AG04450 (cell line): ENCODE measurements at regions of chr2 and their contacts with region 1.

Region 1: DNA sequence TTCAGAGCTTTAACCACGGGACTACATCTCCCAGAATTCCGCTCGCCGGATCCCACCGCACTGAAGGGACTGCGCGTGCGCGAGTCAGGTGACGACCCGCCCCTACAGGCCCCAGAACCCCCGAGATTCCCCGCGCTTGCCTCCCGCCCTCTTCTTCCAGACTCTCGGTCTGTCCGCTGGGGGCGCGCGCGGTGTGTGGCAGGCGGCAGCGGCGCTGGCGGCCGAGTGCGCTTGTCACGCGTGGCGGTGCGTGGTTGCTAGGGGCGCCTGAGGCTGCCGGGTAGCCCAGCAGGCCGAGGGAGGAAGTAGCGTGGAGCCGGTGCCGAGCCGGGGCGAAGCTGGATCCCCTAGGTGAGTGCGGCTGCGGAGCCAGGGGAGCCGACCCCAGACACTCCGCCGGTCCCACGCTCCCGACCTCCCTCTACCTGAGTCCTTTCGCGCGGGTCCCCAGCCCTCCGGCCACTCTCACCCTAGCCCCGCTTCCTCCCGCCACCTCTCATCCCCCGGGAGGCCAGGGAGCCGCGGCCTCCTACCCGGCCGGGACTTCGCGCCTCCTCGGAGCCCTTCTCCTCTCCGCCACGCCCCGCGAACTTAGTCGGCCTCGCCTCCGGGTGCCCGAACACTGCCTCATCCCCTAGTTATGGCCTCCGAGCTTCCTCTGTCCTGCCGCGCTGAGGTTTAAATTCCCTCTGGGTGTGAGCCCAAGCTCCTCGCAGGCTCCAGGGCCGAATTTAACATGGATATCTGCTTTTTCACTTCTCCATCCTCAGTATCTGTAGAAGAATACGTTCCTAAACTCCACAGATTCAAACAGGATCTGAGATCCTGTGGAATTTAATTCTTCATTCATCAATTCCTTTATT is at the start of gene TTLL4:
- DNase-seq: peak; percentile 88
- H3K4me3 ChIP-seq: peak within 1 kb of the TSS; percentile 91
- H3K27ac ChIP-seq: peak within 1 kb of the TSS; percentile 87
- H3K27me3 ChIP-seq: no peaks in the 10 kb centered on the region
- CTCF ChIP-seq: peak; percentile 74
- polyA plus RNA-seq, gene TTLL4: 16.3 and 18.0 TPM in 2 replicates

Region 2: DNA sequence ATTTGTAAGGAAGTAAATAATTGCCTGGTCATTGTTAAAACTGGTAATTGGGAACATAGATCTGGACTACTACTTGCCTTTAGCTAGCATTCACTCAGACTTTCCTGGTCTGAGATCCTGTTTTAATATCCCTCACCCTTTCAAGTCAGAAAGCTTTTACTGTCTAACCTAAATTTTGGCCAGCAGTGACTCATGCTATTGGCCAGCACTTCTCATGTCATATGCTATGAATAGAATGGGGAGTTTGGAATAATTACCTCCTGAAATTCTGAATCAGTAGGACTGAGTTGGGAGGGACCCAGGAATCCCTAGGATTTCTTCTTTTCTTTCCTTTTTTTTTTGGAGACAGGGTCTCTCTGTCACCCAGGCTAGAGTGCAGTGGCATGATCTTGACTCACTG is 19.7 kb before region 1 on chr2:
- CTCF ChIA-PET with region 1: interaction called, 24 read pairs
- POLR2A ChIA-PET with region 1: interaction called, 3 read pairs
- DNase-seq: peak; percentile 10
- H3K4me3 ChIP-seq: no peak overlapping the region
- H3K27ac ChIP-seq: no peak overlapping the region
- H3K27me3 ChIP-seq: no peaks in the 10 kb centered on the region
- CTCF ChIP-seq: no peak

Region 3: DNA sequence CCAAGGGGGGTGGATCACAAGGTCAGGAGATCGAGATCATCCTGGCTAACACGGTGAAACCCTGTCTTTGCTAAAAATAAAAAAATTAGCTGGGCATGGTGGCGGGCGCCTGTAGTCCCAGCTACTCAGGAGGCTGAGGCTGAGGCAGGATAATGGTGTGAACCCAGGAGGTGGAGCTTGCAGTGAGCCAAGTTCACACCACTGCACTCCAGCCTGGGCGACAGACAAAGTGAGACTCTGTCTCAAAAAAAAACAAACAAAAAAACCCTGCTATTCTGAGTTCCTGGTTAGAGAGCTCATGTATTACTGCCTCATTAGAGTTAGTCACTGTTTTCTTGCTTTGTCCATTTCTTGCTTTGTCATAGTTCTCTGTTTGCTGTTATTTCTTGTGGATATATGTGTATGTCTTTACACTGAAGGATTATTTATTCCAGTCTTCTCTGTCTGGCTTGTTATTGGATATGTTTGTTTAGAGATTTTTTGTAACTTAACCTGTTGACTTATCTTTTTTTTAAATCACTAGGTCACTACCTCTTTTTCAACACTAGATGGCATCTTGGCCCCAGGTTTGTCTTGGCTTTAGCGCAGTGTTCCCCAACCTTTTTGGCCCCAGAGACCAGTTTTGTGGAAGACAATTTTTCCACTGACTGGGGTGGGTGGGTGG is 16.7 kb after region 1 on chr2:
- CTCF ChIA-PET with region 1: interaction called, 22 read pairs
- POLR2A ChIA-PET with region 1: interaction called, 7 read pairs
- DNase-seq: no peak
- H3K4me3 ChIP-seq: no peak overlapping the region
- H3K27ac ChIP-seq: no peak overlapping the region
- H3K27me3 ChIP-seq: no peaks in the 10 kb centered on the region
- CTCF ChIP-seq: peak; percentile 42

Region 4: GRCh38 chr2:218733171-218734021 is 22.5 kb after region 1 on chr2:
- CTCF ChIA-PET with region 1: interaction called, 22 read pairs
- POLR2A ChIA-PET with region 1: interaction called, 7 read pairs
- DNase-seq: no peak
- H3K4me3 ChIP-seq: no peak overlapping the region
- H3K27ac ChIP-seq: peak overlapping the region; percentile 95
- H3K27me3 ChIP-seq: no peaks in the 10 kb centered on the region
- CTCF ChIP-seq: no peak

Region 5: GRCh38 chr2:219245148-219245898 is 534.4 kb after region 1 on chr2 and contains the starts of genes GLB1L and STK16:
- CTCF ChIA-PET with region 1: no interaction called
- POLR2A ChIA-PET with region 1: no interaction called
- DNase-seq: peak; percentile 80
- H3K4me3 ChIP-seq: peak within 1 kb of the TSS; percentile 97
- H3K27ac ChIP-seq: peak within 1 kb of the TSS; percentile 70
- H3K27me3 ChIP-seq: no peaks in the 10 kb centered on the region
- CTCF ChIP-seq: 0 out of 2 replicates have a peak, but pooled peaks have one; percentile 4
- polyA plus RNA-seq, gene GLB1L: 8.8 and 9.6 TPM in 2 replicates
- polyA plus RNA-seq, gene STK16: 33.9 and 36.6 TPM in 2 replicates